Activated CD8-positive, alpha-beta T cell treated with anti-CD3 and anti-CD28 coated beads, Interleukin-2, amount 10 ng/mL, durations not matched to agents 7 days and 5 days (primary cell): ENCODE measurements at regions of chr7 and their contacts with region 1.

Region 1: GRCh38 chr7:5396999-5397663 is 26.5 kb downstream of the TNRC18 start:
- DNase-seq: peak; percentile 93
- ATAC-seq: peak; percentile 94
- H3K4me3 Mint-ChIP-seq: peak overlapping the region; percentile 85
- H3K27ac Mint-ChIP-seq: peak overlapping the region; percentile 96
- H3K4me1 Mint-ChIP-seq: peaks cover 44% of the 10 kb centered on the region
- H3K27me3 Mint-ChIP-seq: no peaks in the 10 kb centered on the region

Region 2: DNA sequence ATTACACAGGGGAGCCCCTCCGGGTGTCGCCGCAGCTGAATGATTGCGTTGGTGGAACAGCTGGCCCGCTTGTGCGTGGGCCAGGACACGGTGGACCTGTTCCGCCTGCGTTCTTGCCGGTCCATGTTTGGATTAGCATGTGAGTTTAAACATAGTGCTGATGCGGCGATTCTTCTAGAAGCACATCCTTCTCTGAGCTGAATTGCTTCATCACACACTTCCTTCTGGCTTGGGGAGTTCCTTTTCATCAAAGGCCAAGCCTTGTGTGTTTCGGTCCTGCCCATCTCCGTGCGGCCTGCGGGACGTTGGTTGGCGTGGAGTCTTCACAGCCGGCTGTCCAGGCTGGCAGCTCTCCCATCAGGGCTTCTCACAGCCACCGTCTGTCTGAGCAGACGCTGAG is 159.8 kb before region 1 on chr7:
- CTCF ChIA-PET with region 1: interaction called, 14 read pairs
- POLR2A ChIA-PET with region 1: no interaction called
- DNase-seq: no peak
- ATAC-seq: no peak
- H3K4me3 Mint-ChIP-seq: no peak overlapping the region
- H3K27ac Mint-ChIP-seq: no peak overlapping the region
- H3K4me1 Mint-ChIP-seq: peaks cover 22% of the 10 kb centered on the region
- H3K27me3 Mint-ChIP-seq: peaks cover 23% of the 10 kb centered on the region

Region 3: GRCh38 chr7:5296611-5297226 is 100.4 kb before region 1 on chr7:
- CTCF ChIA-PET with region 1: no interaction called
- POLR2A ChIA-PET with region 1: no interaction called
- DNase-seq: peak; percentile 79
- ATAC-seq: peak; percentile 92
- H3K4me3 Mint-ChIP-seq: peak overlapping the region; percentile 65
- H3K27ac Mint-ChIP-seq: peak overlapping the region; percentile 60
- H3K4me1 Mint-ChIP-seq: peaks cover 14% of the 10 kb centered on the region
- H3K27me3 Mint-ChIP-seq: peaks cover 10% of the 10 kb centered on the region

Region 4: DNA sequence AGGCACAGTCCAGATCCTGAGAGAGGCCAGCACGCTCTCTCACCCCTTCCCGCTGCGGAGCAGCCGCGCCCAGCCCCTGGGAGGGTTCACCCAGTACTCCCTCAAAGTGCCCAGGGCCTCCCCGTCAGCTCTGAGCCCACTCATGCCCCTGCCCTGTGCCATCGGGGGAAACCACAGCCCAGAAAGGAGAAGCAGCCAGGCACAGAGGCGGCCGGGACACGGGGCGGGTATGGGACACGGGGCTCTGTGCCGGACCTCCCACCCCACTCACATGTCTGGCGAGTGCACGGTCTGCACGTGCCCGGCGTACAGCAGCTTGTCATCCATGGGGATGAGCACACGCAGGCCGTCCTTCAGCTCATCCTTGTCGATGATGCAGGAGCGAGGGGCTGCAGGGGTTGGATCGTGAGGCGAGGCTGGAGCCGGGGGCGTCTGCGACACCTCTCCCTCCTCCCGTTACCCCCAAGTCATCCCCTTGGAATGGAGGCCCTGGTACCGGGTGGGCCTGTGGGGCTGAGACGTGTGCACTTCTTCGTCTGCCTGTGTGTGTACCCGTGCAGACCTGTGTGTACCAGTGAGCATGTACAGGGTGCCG is 76.2 kb before region 1 on chr7:
- CTCF ChIA-PET with region 1: no interaction called
- POLR2A ChIA-PET with region 1: no interaction called
- DNase-seq: no peak
- ATAC-seq: no peak
- H3K4me3 Mint-ChIP-seq: no peak overlapping the region
- H3K27ac Mint-ChIP-seq: no peak overlapping the region
- H3K4me1 Mint-ChIP-seq: no peaks in the 10 kb centered on the region
- H3K27me3 Mint-ChIP-seq: no peaks in the 10 kb centered on the region

Region 5: DNA sequence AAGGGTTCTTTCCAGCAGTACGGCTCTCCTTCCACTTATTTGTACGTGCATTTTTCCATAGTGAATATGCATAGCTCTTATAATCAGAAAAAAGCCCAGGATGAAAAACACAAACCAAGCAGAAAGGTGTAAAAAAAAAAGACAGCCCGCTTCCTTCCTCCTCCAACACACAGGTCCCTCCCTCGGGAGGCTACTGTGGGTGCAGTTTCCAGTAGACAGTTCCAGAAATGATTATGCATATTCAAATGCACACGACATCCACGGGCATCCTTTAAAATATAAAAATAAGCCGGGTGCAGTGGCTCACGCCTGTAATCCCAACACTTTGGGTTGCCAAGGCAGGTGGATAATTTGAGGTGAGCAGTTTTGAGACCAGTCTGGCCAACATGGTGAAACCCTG is 33.4 kb before region 1 on chr7:
- CTCF ChIA-PET with region 1: interaction called, 24 read pairs
- POLR2A ChIA-PET with region 1: interaction called, 6 read pairs
- DNase-seq: no peak
- ATAC-seq: no peak
- H3K4me3 Mint-ChIP-seq: no peak overlapping the region
- H3K27ac Mint-ChIP-seq: peak overlapping the region; percentile 72
- H3K4me1 Mint-ChIP-seq: peaks cover 27% of the 10 kb centered on the region
- H3K27me3 Mint-ChIP-seq: no peaks in the 10 kb centered on the region

Region 6: DNA sequence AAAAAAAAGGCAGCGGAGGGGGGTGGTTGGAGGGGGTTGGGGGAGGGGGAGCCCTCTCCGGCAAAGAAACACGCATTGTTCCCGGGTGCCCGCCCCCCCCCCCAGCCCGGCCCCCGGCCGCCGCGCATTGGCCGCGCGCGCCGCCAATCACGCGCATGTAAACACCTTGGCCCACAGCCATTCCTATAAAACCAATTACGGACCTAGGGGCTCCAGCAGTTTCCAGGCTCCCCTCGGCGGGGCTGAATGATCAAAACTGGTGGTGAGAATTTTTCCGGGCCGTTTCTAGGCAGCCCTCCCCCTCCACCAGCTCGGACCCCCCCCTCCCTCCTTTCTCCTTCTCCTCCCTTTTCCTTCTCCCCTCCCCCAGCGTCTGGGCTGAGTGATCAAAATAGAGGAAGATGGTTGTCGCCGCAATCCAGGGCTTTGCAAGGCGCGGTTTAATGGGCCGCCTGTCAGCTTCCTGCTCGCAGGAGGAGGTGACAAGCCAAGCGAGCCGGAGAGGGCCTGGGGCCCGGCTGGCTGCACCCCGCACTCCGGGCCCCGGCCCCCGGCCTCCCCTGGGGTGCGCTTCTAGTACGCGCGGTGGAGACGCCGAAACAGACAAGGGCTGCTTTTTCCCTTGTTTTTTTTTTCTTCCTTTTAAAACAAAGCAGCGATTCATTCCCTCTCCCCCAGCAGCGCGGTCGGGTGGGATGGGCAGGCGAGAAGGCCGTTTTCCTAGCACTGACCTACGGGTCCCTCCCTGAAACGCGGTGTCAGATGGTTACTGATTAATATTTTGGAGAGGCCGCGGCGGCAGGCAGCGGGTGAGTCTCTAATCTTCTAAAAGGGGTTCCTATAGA is 26.9 kb after region 1 on chr7:
- CTCF ChIA-PET with region 1: interaction called, 13 read pairs
- POLR2A ChIA-PET with region 1: interaction called, 20 read pairs
- DNase-seq: peak; percentile 65
- ATAC-seq: peak; percentile 45
- H3K4me3 Mint-ChIP-seq: peak overlapping the region; percentile 69
- H3K27ac Mint-ChIP-seq: peak overlapping the region; percentile 61
- H3K4me1 Mint-ChIP-seq: peaks cover 46% of the 10 kb centered on the region
- H3K27me3 Mint-ChIP-seq: peaks cover 63% of the 10 kb centered on the region

Region 7: DNA sequence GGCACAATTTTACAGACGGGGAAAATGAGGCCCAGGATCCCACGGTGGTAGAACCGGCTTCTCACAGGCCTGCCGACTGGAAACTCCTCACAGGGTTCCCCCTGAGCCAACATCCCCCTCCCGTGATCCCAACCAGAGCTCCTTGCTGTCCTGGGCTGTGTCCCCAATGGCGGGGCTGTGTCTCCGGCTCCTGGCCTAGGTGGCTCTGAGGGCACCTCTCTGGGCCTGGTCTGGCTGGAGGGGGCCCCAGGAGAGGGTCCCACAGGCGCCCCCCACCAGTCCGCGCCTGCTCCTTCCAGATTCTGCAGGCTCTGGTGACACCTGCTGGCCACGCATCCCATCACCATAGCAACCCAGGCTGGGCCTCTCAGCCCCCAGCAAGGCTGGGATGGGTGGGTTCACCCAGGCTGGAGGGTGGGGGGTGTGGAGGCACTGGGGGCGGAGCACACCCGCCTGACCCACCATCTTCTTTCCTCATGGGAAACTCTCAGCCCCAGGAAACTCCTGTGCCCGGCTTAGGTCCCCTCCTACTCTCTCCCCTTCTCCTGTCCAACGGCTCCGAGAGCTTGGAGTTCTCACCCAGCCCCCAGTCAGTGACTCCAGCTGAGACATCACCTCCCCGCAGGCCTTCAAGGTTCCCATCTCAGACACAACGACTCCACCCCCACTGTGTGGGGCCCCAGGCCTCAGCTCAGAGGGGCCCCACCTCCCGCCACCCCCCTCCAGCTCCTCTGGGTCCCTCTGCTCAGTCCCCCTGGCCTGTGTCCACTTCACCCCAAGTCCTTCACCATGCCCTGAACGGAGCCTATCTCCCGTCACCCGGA is 53.6 kb after region 1 on chr7:
- CTCF ChIA-PET with region 1: interaction called, 31 read pairs
- POLR2A ChIA-PET with region 1: interaction called, 12 read pairs
- DNase-seq: peak; percentile 53
- ATAC-seq: peak; percentile 68
- H3K4me3 Mint-ChIP-seq: no peak overlapping the region
- H3K27ac Mint-ChIP-seq: no peak overlapping the region
- H3K4me1 Mint-ChIP-seq: peaks cover 3% of the 10 kb centered on the region
- H3K27me3 Mint-ChIP-seq: peaks cover 4% of the 10 kb centered on the region

Region 8: GRCh38 chr7:5557920-5558401 is 160.8 kb after region 1 on chr7:
- CTCF ChIA-PET with region 1: interaction called, 20 read pairs
- POLR2A ChIA-PET with region 1: interaction called, 3 read pairs
- DNase-seq: peak; percentile 39
- ATAC-seq: peak; percentile 21
- H3K4me3 Mint-ChIP-seq: peak overlapping the region; percentile 81
- H3K27ac Mint-ChIP-seq: peak overlapping the region; percentile 90
- H3K4me1 Mint-ChIP-seq: peaks cover 55% of the 10 kb centered on the region
- H3K27me3 Mint-ChIP-seq: peaks cover 7% of the 10 kb centered on the region